A549 (cell line): ENCODE measurements at regions of chr17 and their contacts with region 1.

Region 1: DNA sequence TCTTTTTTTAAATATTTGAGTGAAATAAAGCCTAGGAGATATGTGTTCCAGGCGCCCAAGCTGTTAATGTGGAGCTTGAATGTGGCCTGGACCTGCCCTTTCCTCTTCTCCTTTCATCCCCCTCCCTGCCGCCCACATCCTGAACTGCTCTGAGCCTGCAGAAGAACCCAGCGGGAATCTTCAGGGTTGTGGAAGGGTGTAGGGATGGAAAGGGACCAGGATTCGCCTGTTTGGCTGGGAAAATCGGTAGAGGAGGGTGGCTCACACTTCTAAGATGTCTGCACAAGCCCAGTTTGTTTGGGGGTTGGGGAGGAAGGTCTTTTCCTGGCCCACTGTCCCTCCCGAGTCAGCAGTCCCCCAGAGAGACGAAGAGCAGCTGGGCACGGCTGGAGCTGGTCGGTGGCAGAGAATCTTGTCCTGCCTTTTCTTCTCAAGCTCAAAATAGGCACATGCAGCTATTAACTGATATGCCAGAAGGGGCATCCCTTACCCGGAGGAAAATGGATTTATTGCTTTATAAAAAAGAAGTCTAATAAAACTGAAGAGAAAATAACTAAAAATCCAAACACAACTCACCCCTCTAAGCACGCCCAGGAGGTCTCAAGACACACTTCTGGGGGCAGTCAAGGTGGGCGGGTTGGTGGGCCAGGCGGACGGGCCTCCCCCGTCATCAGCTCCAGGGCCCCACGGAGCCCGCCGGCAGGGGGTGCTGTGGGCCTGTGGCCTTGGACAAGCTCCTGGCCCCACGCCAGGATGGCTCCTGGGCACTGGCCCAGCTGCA is 11.5 kb upstream of the PITPNA start:
- DNase-seq: peak; percentile 82 to 92
- ATAC-seq: peak; percentile 73 to 87
- H3K4me3 ChIP-seq: no peak overlapping the region
- H3K27ac ChIP-seq: peak overlapping the region in 1 of 2 experiments; percentile 65; a peak in 3 of 6 replicates
- H3K4me1 ChIP-seq: peaks cover 17% of the 10 kb centered on the region
- CTCF ChIP-seq: peak; percentile 98
- EP300 ChIP-seq: no peak
- POLR2A ChIP-seq: no peak
- RAD21 ChIP-seq: peak; percentile 95 to 100

Region 2: DNA sequence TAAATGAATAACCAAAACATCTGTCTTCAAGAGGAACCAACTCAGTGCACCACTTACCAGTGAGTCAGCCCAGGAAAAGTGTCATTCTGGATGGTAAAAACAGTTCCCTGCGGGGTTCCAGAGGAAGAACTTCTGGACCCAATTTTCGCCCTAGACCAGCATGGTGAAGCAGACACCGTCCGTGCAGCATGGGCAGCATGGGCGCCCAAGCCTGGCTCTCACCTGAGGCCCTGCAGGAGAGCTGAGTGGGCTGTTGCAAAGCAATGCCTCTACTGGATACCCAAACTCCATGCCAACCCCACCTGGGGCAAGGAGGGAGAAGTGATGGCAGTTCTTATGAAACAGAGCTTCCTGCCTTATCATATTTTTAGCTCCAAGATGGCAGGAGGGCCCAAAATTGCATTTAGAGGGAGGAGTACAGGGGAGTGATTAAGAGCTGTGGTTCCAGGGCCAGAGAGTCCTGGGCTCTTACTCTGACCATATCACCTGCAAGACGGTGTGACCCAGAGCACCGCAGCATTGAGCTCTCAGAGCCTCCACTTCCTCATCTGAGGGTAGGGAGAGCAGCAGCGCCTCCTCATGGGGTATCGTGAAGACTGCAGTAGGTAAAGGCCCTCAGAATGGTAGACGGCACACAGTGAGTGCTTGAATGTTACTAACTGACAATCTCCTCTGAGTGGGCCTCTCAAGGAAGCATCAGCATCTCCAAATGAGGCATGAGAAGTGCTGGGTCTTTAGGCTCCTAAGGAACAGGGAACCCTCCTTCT is 41.1 kb before region 1 on chr17:
- CTCF ChIA-PET with region 1: interaction called, 13 read pairs
- POLR2A ChIA-PET with region 1: no interaction called
- DNase-seq: peak in 1 of 2 experiments; percentile 62
- ATAC-seq: peak; percentile 63 to 84; a peak in 5 of 6 replicates
- H3K4me3 ChIP-seq: no peak overlapping the region
- H3K27ac ChIP-seq: no peak overlapping the region
- H3K4me1 ChIP-seq: peaks cover 3% of the 10 kb centered on the region; the same call in 1 of the 3 replicates
- CTCF ChIP-seq: peak; percentile 25; the same call in 1 of the 3 replicates
- EP300 ChIP-seq: no peak
- POLR2A ChIP-seq: no peak
- RAD21 ChIP-seq: peak in 1 of 2 experiments; percentile 35; a peak in 2 of 5 replicates

Region 3: GRCh38 chr17:1561400-1562175 is 12.5 kb before region 1 on chr17:
- CTCF ChIA-PET with region 1: interaction called, 24 read pairs
- POLR2A ChIA-PET with region 1: interaction called, 6 read pairs
- DNase-seq: peak in 1 of 2 experiments; percentile 63
- ATAC-seq: peak; percentile 52 to 58
- H3K4me3 ChIP-seq: peak overlapping the region; percentile 91
- H3K27ac ChIP-seq: peak overlapping the region; percentile 94 to 97
- H3K4me1 ChIP-seq: peaks cover 16% of the 10 kb centered on the region; the same call in 2 of the 3 replicates
- CTCF ChIP-seq: peak; percentile 20; the same call in 1 of the 3 replicates
- EP300 ChIP-seq: no peak
- POLR2A ChIP-seq: no peak
- RAD21 ChIP-seq: 0 out of 5 replicates have a peak, but pooled peaks of 1 of the 2 experiments have one; percentile 13

Region 4: DNA sequence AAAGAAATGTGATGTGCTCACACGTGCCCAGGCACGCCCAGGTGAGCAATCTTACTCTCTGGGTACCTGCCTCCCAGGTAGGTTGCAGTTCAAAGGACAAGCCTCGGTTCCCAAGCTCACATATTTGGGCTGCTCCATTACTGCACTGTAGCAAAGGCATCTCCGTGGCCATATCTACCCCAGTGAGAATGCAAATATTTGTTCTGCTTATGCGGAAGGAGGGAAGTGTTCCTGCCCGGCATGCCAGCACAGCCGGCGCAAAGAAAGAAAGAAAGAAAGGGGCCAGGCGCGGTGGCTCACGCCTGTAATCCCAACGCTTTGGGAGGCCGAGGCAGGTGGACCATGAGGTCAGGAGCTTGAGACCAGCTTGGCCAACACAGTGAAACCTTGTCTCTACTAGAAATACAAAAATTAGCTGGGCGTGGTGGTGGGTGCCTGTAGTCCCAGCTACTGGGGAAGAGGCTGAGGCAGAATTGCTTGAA is 23.8 kb after region 1 on chr17:
- CTCF ChIA-PET with region 1: interaction called, 21 read pairs
- POLR2A ChIA-PET with region 1: no interaction called
- DNase-seq: no peak
- ATAC-seq: peak in 1 of 2 experiments; percentile 75; a peak in 3 of 6 replicates
- H3K4me3 ChIP-seq: no peak overlapping the region
- H3K27ac ChIP-seq: peak overlapping the region in 1 of 2 experiments; percentile 61; a peak in 3 of 6 replicates
- H3K4me1 ChIP-seq: peaks cover 7% of the 10 kb centered on the region
- CTCF ChIP-seq: no peak
- EP300 ChIP-seq: no peak
- POLR2A ChIP-seq: no peak
- RAD21 ChIP-seq: no peak

Region 5: GRCh38 chr17:1617620-1618174 is 43.6 kb after region 1 on chr17:
- CTCF ChIA-PET with region 1: interaction called, 263 read pairs
- POLR2A ChIA-PET with region 1: interaction called, 6 read pairs
- DNase-seq: peak; percentile 80 to 88
- ATAC-seq: peak; percentile 86 to 88
- H3K4me3 ChIP-seq: no peak overlapping the region
- H3K27ac ChIP-seq: peak overlapping the region; percentile 83 to 84
- H3K4me1 ChIP-seq: peaks cover 17% of the 10 kb centered on the region
- CTCF ChIP-seq: peak; percentile 48
- EP300 ChIP-seq: no peak
- POLR2A ChIP-seq: no peak
- RAD21 ChIP-seq: peak; percentile 46 to 48; a peak in 4 of 5 replicates

Region 6: DNA sequence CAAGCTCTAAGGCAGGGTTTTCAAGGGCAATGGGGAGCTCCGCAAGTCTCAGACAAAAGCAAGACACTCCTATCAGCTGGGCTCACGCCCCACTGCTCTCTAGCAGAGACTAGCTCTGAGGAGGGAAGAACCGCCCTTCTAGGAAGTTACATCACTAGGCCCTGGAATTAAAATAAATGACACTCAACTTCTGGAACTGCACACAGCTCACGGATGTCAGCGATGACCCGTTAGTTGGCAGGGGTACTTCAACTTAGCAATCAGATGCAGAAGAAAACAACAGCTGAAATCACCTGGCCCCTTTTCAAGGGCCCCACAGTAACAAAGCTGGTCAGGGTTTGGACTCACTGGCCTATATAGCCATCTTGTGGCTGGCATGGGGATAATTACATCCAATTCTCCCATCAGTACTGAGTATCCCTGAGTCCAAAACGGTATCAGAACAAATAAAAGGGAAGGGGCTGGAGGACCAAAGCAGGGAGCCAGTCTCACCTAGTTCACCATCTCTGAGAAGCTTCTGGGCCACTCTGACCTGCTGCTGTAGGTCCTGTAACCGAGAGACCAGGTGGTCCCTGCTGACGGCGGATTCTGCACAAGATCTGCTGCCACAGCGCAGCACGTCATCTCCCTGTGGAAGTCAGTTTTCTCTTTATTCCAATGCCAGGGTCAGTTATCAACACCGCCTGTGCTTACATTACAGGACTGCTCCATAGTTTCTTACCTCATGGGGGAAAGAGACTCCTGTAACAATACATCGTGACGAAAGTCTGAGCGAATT is 209.9 kb after region 1 on chr17:
- CTCF ChIA-PET with region 1: interaction called, 15 read pairs
- POLR2A ChIA-PET with region 1: no interaction called
- DNase-seq: peak; percentile 68 to 77
- ATAC-seq: peak; percentile 78 to 86
- H3K4me3 ChIP-seq: no peak overlapping the region
- H3K27ac ChIP-seq: 0 out of 6 replicates have a peak overlapping the region, but pooled peaks of 1 of the 2 experiments have one; percentile 6
- H3K4me1 ChIP-seq: peaks cover 23% of the 10 kb centered on the region
- CTCF ChIP-seq: peak; percentile 77
- EP300 ChIP-seq: no peak
- POLR2A ChIP-seq: no peak
- RAD21 ChIP-seq: peak; percentile 85 to 93